Cardiac septum (tissue), 1 donor: ENCODE measurements at regions of chr1 and their contacts with region 1.

Region 1: GRCh38 chr1:32335790-32336590 is at the start of gene MARCKSL1:
- DNase-seq: peak; percentile 93
- total RNA-seq, gene MARCKSL1: 12.0 TPM

Region 2: GRCh38 chr1:32361674-32362473 is 25.9 kb after region 1 on chr1:
- intact Hi-C with region 1: loop called (anchors 1 kb)
- DNase-seq: peak; percentile 82

Region 3: GRCh38 chr1:32372149-32372756 is 36.3 kb after region 1 on chr1:
- intact Hi-C with region 1: no loop called
- DNase-seq: no peak

Region 4: GRCh38 chr1:32394141-32394889 is 58.3 kb after region 1 on chr1 and contains the start of gene BSDC1:
- intact Hi-C with region 1: loop called (anchors 2 kb)
- DNase-seq: peak; percentile 99
- total RNA-seq, gene BSDC1: 41.3 TPM